PC-9 (cell line): ENCODE measurements at regions of chr3 and their contacts with region 1.

Region 1: GRCh38 chr3:77038468-77038929 is 1.4 kb upstream of the ROBO2 start:
- DNase-seq: peak in 1 of 2 experiments; percentile 45
- H3K4me3 ChIP-seq: no peak overlapping the region
- H3K27ac ChIP-seq: no peak overlapping the region
- H3K4me1 ChIP-seq: no peaks in the 10 kb centered on the region
- H3K27me3 ChIP-seq: peaks cover 7% of the 10 kb centered on the region; the same call in 1 of the 2 replicates
- CTCF ChIP-seq: peak; percentile 62

Region 2: GRCh38 chr3:77254967-77255831 is 216.7 kb after region 1 on chr3:
- CTCF ChIA-PET with region 1: no interaction called
- POLR2A ChIA-PET with region 1: no interaction called
- intact Hi-C with region 1: loop called (anchors 2 kb)
- DNase-seq: peak in 1 of 2 experiments; percentile 6
- H3K4me3 ChIP-seq: no peak overlapping the region
- H3K27ac ChIP-seq: no peak overlapping the region
- H3K4me1 ChIP-seq: no peaks in the 10 kb centered on the region
- H3K27me3 ChIP-seq: no peaks in the 10 kb centered on the region
- CTCF ChIP-seq: peak; percentile 73